AG04449 (cell line): ENCODE measurements at regions of chr15 and their contacts with region 1.

Region 1: DNA sequence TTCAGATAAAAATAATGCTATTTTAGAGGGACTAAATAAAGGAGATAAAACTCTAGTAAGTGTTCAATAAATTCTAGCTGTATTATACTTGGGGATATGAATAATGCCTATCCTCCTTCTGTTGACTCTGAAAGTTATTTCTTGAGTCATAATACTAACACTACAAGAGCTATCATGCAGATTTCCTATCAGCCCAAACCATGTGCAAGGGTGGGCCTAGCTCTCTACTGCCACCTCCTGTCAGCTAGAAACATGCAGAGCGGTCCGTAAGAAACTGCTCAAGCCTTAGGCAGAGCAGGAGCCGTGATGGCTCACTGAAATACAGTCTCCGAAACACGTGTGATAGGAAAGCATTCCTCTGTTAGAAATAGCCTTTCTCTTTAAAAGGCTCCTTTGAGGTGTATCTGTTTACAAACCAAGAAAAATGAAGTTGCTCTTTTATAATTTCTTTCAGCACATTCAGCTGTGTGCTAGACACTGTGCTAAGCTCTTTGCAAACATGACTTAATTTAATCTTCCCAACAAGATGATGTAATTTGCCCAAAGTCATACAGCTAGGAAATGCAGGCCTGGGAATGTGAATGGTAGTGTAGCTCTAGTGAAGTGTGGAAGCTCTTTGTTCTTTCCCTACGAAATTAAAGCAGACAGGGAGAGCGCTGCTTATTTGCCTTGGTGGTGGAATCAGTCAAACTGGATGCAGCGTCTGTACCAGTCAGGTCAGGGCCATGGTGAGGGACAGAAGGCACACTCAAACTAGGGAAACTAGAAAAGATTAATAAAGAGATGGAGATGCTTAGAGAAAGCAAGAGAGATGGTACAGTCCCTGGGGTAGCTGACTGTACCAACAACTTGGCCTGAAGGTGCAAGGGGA is 43.1 kb downstream of the MTHFS start:
- DNase-seq: peak; percentile 60
- H3K4me3 ChIP-seq: no peak overlapping the region
- CTCF ChIP-seq: peak; percentile 96

Region 2: GRCh38 chr15:79078763-79079410 is 774.8 kb before region 1 on chr15:
- CTCF ChIA-PET with region 1: no interaction called
- POLR2A ChIA-PET with region 1: no interaction called
- DNase-seq: no peak
- H3K4me3 ChIP-seq: no peak overlapping the region
- CTCF ChIP-seq: no peak

Region 3: GRCh38 chr15:79339564-79340314 is 514.0 kb before region 1 on chr15:
- CTCF ChIA-PET with region 1: interaction called, 482 read pairs
- POLR2A ChIA-PET with region 1: interaction called, 3 read pairs
- DNase-seq: peak; percentile 21
- H3K4me3 ChIP-seq: no peak overlapping the region
- CTCF ChIP-seq: peak; percentile 74

Region 4: GRCh38 chr15:79357566-79357965 is 496.1 kb before region 1 on chr15:
- CTCF ChIA-PET with region 1: interaction called, 23 read pairs
- POLR2A ChIA-PET with region 1: no interaction called
- DNase-seq: no peak
- H3K4me3 ChIP-seq: no peak overlapping the region
- CTCF ChIP-seq: no peak

Region 5: DNA sequence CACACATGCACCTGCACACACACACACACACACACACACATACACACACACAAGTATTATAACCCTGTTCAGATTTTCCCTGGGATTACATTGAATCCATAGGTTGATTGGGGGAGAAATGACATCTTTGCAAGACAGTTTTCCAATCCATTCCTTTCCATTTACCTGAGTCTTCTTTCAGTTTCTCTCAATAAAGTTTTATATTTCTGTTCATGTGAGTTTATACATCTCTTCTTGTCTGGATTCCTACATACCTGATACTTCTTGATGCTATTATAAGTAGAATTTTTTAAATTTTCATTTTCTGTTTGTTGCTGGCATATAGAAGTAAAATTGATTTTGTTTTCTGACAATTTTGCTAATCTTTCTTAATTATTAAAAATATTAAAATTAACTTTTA is 466.1 kb before region 1 on chr15:
- CTCF ChIA-PET with region 1: interaction called, 18 read pairs
- POLR2A ChIA-PET with region 1: no interaction called
- DNase-seq: no peak
- H3K4me3 ChIP-seq: no peak overlapping the region
- CTCF ChIP-seq: no peak

Region 6: GRCh38 chr15:79431636-79432344 is 421.9 kb before region 1 on chr15 and contains the start of gene MINAR1:
- CTCF ChIA-PET with region 1: interaction called, 35 read pairs
- POLR2A ChIA-PET with region 1: no interaction called
- DNase-seq: no peak
- H3K4me3 ChIP-seq: peak within 1 kb of the TSS; percentile 64
- CTCF ChIP-seq: peak; percentile 26

Region 7: DNA sequence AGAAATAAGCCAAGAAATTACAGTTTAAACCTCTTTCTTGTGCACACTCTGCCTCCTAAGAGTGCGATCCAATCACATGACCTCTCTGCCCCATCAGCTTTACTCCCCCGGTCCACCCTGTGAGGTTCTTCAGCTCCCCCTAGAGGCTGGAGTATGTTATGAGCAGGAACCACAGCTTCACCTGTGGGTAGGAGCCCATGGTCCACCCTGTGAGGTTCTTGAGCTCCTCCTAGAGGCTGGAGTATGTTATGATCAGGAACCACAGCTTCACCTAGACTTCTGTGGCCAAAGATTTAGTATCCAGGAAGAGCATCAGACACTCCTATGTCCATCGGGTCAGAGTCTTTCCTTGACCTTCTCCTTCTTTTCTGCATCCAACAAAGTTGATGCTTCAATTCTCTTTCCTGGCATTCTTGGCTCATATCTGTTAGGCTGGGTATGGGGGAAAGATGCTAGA is 257.6 kb before region 1 on chr15:
- CTCF ChIA-PET with region 1: interaction called, 63 read pairs
- POLR2A ChIA-PET with region 1: no interaction called
- DNase-seq: no peak
- H3K4me3 ChIP-seq: no peak overlapping the region
- CTCF ChIP-seq: peak; percentile 66

Region 8: DNA sequence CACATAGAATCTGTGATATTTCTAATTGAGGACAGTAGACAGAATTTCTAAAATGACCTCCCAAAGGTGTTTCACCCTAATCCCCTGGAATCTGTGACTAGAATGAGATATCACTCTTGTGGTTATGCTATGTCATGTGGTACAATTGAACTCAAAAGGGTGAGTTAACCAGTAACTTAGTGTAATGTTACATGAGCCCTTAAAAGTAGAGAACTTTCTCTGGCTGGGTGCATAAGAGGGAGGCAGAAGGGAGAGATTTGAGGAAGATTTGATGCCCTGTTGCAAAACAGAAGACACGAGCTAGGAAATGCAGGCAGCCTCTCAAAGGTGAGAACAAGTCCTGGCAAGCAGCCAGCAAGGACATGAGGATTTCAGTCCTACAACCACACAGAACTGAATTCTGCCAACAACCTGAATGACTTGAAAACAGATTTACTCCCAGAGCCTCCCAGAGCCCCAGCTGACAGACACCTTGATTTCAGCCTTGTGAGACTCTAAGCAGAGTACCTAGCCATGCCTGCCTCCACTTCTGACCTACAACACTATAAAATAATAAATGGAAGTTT is 117.2 kb before region 1 on chr15:
- CTCF ChIA-PET with region 1: no interaction called
- POLR2A ChIA-PET with region 1: no interaction called
- DNase-seq: no peak
- H3K4me3 ChIP-seq: no peak overlapping the region
- CTCF ChIP-seq: no peak

Region 9: DNA sequence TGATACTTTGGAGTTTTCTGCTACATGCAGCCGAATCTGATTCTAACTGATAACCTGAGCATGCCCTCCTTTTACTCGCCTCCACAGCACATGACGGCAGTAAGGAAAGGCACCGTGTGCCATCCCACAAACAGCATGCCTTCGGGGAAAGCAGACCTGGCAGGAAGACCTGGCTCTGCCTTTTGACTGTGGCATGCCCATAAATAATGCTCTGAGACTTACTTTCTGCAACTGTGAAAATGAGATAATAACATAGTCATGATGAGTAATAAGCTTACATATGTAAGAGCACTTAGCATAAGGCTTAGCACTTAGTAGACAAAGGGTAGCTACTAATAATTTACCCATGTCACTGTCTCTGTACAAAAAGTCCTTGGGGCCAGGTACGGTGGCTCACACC is 10.2 kb after region 1 on chr15:
- CTCF ChIA-PET with region 1: interaction called, 47 read pairs
- POLR2A ChIA-PET with region 1: no interaction called
- DNase-seq: no peak
- H3K4me3 ChIP-seq: no peak overlapping the region
- CTCF ChIP-seq: no peak